ENCODE measurements at regions of chr6 and their contacts with region 1.

Region 1: GRCh38 chr6:42075159-42075838 is 25.0 kb downstream of the TAF8 start:
- DNase-seq: peak; percentile 87
- ATAC-seq: peak; percentile 67

Region 2: DNA sequence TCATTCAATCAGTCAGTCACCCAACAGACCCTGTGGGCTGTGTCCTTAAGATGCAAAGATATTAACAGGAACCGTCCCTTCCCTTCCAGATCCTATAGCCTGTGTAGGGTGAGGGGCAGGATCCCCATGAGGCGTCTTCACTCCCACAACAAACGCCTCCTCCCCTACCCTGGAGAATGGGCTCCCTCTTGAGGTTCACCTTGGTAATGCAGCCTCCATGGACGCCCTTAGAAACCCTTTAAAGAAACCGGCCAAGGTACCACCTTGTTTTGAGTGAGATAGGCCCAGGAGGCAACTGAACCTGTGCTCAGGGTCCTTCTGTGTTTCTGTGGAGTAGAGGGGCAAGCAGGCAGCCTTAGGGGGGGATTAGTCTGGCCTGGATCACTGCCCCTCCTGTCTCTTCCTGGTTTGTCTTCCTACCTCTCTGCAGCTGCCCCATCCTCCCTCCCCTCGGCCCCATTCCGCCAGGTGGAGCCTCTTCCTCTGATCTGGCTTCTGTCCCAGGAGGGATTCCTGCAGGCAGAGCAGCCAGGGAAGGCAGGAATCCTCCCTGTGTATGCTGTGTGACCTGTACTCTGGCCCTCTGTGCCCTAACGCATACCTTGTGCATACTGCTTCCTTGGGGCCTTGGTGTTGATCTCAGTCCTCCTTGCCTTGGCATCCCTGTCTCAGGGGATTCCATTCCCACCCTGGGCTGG is 91.3 kb after region 1 on chr6:
- intact Hi-C with region 1: loop called (anchors 1 kb)
- DNase-seq: no peak
- ATAC-seq: peak; percentile 77

Region 3: GRCh38 chr6:42210551-42210950 is 135.3 kb after region 1 on chr6:
- intact Hi-C with region 1: loop called (anchors 5 kb)
- DNase-seq: no peak
- ATAC-seq: no peak